ENCODE measurements at regions of chr18 and their contacts with region 1.

Region 1: GRCh38 chr18:74652392-74652988 is 54.8 kb downstream of the ZNF407 start:
- DNase-seq: no peak
- H3K4me3 Mint-ChIP-seq: no peak overlapping the region
- H3K27ac Mint-ChIP-seq: no peak overlapping the region
- H3K4me1 Mint-ChIP-seq: peaks cover 2% of the 10 kb centered on the region
- H3K27me3 Mint-ChIP-seq: no peaks in the 10 kb centered on the region

Region 2: GRCh38 chr18:74963820-74964446 is 311.4 kb after region 1 on chr18:
- CTCF ChIA-PET with region 1: no interaction called
- intact Hi-C with region 1: loop called (anchors 2 kb)
- DNase-seq: peak; percentile 12
- H3K4me3 Mint-ChIP-seq: no peak overlapping the region
- H3K27ac Mint-ChIP-seq: no peak overlapping the region
- H3K4me1 Mint-ChIP-seq: no peaks in the 10 kb centered on the region
- H3K27me3 Mint-ChIP-seq: no peaks in the 10 kb centered on the region

Region 3: DNA sequence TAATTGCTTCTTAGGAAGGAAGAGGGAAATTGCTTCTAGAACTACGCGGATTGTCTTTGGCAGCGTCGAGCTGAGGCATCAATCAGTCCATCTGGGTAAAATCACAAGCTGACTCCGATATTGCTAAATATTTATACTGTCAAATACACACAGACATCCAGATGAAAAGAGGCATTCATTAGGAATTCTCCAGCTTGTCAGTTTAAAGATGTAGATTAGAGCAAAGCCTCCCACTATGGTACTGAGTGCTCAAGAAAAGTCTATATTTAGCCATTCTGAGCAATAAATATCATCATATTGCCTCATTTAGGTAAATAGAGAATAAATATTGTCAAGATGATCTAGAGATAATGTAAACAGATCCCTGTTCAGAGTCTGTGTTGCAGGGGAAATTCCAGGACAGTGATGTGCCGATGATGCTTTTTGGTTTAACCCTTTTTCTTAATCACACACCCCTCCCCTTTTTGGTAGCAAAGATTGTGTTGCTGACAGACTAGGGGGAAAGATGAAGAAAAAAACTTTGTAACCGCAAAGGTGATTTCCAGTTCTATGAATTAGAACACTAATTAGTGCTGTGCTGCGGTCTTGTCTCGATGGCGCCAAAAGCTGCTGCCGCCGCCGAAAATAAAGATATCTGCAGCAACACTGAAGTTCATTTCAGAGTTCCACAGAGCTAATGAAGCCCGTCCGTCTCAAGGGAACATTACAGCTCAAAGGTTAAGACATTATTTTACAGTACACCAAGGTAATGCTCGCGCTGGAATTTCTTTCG is 384.6 kb after region 1 on chr18:
- CTCF ChIA-PET with region 1: no interaction called
- intact Hi-C with region 1: no loop called
- DNase-seq: no peak
- H3K4me3 Mint-ChIP-seq: no peak overlapping the region
- H3K27ac Mint-ChIP-seq: no peak overlapping the region
- H3K4me1 Mint-ChIP-seq: peaks cover 5% of the 10 kb centered on the region
- H3K27me3 Mint-ChIP-seq: no peaks in the 10 kb centered on the region

Region 4: DNA sequence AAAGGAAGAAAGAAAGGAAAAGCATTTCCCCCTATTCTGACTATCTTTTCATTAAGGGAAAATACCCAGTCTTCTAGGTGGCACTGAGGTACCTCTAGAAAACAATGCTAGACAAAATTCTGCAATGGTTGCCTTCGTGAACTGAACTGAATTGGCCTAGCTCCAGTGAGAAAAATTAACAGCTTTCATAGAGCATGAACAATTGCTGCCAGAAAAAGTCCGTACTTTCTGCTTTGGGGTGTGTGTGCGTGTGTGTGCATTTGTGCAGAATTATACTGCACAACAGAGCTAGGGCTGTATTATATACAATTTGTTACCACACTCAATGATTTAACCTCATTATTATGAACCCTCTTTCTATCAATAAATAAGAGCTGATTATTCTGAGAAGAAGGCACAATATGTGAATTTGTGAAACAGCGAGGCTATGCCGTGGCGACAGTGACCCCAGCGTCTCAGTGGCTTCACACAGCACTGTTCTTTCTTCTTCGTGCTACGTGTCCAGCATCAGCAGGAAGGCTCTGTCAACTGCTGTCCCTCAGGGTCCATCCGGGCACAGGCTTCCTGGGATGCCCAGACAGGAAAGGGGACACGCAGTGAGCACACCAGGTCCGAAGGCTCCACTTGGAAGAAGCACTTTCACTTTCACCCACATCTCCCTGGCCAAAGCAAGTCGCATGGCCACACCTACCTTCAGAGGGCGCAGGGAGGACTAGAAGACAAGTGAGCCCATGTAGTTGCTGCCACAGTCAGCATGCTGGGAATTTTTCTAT is 509.0 kb after region 1 on chr18:
- CTCF ChIA-PET with region 1: no interaction called
- intact Hi-C with region 1: loop called (anchors 10 kb)
- DNase-seq: peak; percentile 12
- H3K4me3 Mint-ChIP-seq: peak overlapping the region; percentile 62
- H3K27ac Mint-ChIP-seq: no peak overlapping the region
- H3K4me1 Mint-ChIP-seq: peaks cover 10% of the 10 kb centered on the region
- H3K27me3 Mint-ChIP-seq: no peaks in the 10 kb centered on the region

Region 5: GRCh38 chr18:75478996-75479880 is 826.7 kb after region 1 on chr18:
- CTCF ChIA-PET with region 1: interaction called, 3 read pairs
- intact Hi-C with region 1: loop called (anchors 1 kb)
- DNase-seq: no peak
- H3K4me3 Mint-ChIP-seq: no peak overlapping the region
- H3K27ac Mint-ChIP-seq: no peak overlapping the region
- H3K4me1 Mint-ChIP-seq: peaks cover 5% of the 10 kb centered on the region
- H3K27me3 Mint-ChIP-seq: peaks cover 16% of the 10 kb centered on the region

Region 6: GRCh38 chr18:76274468-76275289 is 1622.2 kb after region 1 on chr18:
- CTCF ChIA-PET with region 1: no interaction called
- intact Hi-C with region 1: loop called (anchors 10 kb)
- DNase-seq: peak; percentile 26
- H3K4me3 Mint-ChIP-seq: no peak overlapping the region
- H3K27ac Mint-ChIP-seq: no peak overlapping the region
- H3K4me1 Mint-ChIP-seq: no peaks in the 10 kb centered on the region
- H3K27me3 Mint-ChIP-seq: no peaks in the 10 kb centered on the region

Measured in activated naive CD4-positive, alpha-beta T cell treated with anti-CD3 and anti-CD28 coated beads for 36 hours (primary cell).